Posterior vena cava (tissue), 2 donors: ENCODE measurements at regions of chr5 and their contacts with region 1.

Region 1: GRCh38 chr5:58530942-58531490 is 39.8 kb downstream of the GAPT start:
- DNase-seq: no peak

Region 2: GRCh38 chr5:58286741-58287140 is 244.3 kb before region 1 on chr5:
- intact Hi-C with region 1: no loop called
- DNase-seq: no peak

Region 3: DNA sequence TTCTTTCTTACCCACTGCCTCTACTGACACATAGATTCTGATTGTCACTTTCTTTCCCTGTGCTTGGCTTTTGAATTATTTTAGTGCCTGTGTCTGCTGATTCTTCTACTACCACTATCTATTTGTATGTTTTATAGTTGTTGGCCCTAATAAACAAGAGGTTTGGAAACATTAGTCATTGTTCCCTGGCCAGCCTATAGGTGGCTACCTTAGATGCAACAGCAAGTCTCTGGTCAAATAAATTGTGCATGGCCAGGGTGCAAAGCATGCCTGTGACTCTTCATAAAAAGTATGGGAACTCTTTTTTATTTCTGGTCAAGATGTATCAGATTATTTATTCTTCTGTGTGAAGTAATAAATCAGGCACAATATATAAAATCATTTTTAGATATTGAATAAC is 195.5 kb before region 1 on chr5:
- intact Hi-C with region 1: loop called in 1 of 2 experiments (anchors 10 kb)
- DNase-seq: no peak

Region 4: GRCh38 chr5:58383459-58383858 is 147.6 kb before region 1 on chr5:
- intact Hi-C with region 1: no loop called
- DNase-seq: no peak

Region 5: DNA sequence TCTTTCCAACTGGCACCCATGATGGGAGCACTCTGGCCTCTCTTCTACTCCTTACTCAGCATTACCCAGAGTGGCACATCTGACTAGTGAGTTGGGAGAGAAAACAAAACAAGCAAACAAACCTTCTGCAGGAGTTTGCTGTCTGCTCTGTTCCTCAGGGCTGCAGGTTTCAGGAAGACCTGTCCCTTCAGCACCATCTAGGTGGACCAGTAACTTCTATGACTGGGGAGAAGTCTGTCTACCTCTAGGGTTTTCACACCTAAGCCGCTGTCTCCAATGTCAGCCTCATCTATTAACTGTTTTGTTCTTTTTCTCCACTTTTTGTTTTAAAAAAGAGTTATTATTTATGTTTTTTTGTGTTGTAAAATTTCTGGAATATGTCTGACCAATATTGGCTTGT is 110.5 kb after region 1 on chr5:
- intact Hi-C with region 1: no loop called
- DNase-seq: no peak